Sciatic nerve (tissue), 2 donors: ENCODE measurements at regions of chr1 and their contacts with region 1.

Region 1: GRCh38 chr1:192477630-192478029 is 97.9 kb upstream of the RGS1 start:
- DNase-seq: no peak
- ATAC-seq: peak; percentile 89

Region 2: DNA sequence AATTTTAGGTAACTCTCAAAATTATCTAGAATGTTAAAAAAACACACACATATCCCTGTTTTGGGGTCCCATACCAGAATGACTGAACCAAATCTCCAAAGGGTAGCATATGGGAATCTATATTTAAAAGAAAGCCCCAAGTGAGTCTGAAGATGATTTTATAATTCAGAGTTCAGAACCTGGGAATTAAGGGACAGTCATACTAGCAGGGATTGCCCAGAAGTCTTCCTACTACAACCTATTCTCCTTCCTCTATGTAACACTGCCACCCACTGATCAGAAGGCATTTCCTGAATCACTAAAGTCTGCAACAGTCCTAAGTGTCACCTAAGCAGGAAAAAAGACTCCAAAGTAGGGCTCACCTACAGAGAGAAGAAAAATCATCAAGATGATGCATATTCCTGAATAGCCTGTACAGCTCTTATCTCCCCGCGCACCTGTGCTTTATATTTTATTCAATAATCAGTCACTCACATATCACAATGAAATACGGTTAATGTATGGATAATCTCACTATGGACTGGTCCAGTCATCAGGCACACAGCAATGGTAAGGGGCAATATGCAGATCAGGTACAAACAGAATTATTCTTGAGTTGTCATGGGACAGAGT is 102.8 kb after region 1 on chr1:
- intact Hi-C with region 1: loop called (anchors 10 kb)
- DNase-seq: no peak
- ATAC-seq: peak; percentile 87

Region 3: DNA sequence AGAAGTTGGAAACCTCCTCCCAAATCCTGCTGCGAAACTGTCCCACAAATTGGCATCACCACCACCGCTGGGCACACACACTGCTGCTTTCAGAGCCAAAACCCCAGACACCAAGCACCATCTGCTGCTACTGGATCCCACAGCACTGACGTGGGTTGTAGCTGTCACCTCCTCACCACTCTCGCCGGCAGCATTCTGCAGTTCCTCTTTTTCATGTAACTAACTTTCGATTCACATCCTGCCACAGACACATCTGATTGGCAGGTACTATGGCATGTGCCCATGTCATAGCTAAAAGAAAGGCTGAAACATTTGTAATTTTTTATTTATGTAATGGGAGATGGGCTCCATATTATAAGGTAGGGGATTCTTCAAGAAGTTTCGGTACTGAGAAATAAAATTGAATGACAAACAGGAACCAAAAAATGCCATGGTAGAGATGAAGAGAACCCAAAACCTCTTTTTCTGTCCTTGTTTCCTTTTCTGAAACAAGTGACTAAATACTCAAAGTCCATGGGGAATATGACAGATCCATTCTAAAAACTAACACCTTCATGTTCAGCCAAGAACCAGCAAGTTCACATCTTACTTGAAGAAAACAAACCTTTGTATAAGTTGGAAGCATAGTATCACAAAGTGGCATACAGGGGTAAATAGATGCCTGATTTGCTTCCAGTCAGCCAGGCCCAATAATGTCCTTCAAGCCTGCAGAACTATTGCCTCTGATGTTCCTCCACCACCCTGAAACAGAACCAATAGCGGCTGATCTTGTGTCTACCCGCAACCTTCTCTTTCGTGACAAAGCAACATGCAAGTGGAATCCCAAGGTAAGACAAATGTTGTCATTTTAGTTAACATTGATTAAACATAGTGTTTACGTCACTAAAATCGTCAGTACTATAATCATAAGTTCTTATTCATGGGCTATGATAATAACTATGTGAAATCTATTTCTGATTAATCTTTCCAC is 131.8 kb after region 1 on chr1:
- intact Hi-C with region 1: loop called (anchors 10 kb)
- DNase-seq: peak; percentile 69
- ATAC-seq: peak; percentile 88

Region 4: DNA sequence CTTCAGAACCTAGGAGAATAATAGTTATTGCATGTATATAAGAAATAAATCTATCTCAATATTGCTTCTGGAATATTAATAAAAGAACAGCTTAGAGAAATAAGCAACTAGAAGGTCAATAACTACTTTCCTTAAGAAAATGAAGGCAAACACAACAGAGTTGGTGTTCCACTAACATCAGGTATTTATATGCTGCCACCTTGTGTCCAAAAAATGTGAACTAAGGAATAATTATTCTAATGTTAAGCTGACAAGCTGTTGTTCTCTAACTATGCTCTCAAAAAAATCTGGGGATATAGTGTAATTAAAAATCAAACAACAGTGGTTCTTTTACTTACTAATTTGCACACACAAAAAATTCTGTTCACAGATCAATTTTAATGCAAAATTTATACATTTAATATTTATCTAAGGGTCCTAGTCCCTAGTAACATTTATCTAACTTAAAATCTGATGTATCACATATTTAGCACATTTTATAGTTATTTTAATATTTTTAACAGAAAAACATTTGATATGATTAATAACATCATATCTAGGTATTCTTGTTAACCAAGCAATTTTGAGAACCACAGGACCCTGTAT is 541.9 kb after region 1 on chr1:
- intact Hi-C with region 1: loop called (anchors 10 kb)
- DNase-seq: no peak
- ATAC-seq: no peak

Region 5: GRCh38 chr1:193437785-193438184 is 960.2 kb after region 1 on chr1:
- intact Hi-C with region 1: no loop called
- DNase-seq: no peak
- ATAC-seq: no peak